Tibial artery (tissue), 4 donors: ENCODE measurements at regions of chrX and their contacts with region 1.

Region 1: GRCh38 chrX:18899796-18900447 is 84.0 kb downstream of the PHKA2 start:
- DNase-seq: no peak
- H3K4me3 ChIP-seq: no peak overlapping the region
- H3K27ac ChIP-seq: no peak overlapping the region
- H3K4me1 ChIP-seq: peaks cover 0 to 20% (median 8%) of the 10 kb centered on the region in 4 donors
- H3K27me3 ChIP-seq: no peaks in the 10 kb centered on the region
- CTCF ChIP-seq: peak in 1 of 2 experiments; percentile 19

Region 2: DNA sequence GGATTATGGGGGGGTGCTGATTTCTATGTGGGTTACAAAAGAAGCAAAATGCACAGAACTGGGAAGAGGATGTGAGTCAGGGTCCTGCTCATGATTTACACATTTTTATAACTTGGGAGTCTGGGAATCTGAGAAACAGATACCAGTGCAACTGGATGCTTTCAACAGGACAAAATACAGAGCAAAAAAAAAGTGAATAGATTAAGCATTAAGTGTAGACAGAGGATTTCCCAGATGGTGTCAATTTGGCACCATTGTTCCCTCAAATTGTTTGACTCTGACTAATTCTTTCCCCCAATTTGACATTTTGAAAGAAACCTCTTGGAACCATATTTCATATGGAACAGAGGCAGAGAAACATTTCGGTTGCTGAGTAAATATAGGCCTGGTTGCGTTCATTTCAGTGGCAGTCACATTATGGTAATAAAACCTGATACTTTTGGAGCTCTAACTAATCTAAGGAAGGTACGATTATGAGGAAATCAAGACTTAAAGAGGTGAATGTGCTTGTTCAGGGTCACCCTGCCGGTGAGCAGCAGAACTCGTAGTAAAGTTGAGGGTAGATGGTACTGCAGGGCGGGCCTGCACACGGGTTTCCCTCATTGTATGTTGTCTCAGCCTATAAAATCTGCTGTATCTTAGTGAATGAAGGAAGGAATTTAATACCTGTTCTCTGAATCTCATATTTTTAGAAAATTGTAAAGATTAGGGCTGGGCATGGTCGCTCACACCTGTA is 493.2 kb before region 1 on chrX:
- intact Hi-C with region 1: loop called (anchors 5 kb)
- DNase-seq: no peak
- H3K4me3 ChIP-seq: no peak overlapping the region
- H3K27ac ChIP-seq: no peak overlapping the region
- H3K4me1 ChIP-seq: no peaks in the 10 kb centered on the region
- H3K27me3 ChIP-seq: no peaks in the 10 kb centered on the region
- CTCF ChIP-seq: no peak